HepG2 (cell line): ENCODE measurements at regions of chr2 and their contacts with region 1.

Region 1: GRCh38 chr2:15939854-15940660 is at the start of gene MYCN:
- DNase-seq: peak; percentile 41
- ATAC-seq: peak; percentile 68
- H3K4me3 ChIP-seq: peak within 1 kb of the TSS in 1 of 3 experiments; percentile 37; a peak in 1 of 6 replicates
- H3K27ac ChIP-seq: no peak within 1 kb of the TSS
- H3K4me1 ChIP-seq: peaks cover 11% of the 10 kb centered on the region; the same call in 1 of the 2 replicates
- H3K27me3 ChIP-seq: peaks cover 23 to 49% of the 10 kb centered on the region in 2 experiments
- CTCF ChIP-seq: no peak; the same call in 1 of the 2 replicates
- EP300 ChIP-seq: no peak
- POLR2A ChIP-seq: no peak
- RAD21 ChIP-seq: peak; percentile 95
- total RNA-seq, gene MYCN: not detected in 2 replicates

Region 2: DNA sequence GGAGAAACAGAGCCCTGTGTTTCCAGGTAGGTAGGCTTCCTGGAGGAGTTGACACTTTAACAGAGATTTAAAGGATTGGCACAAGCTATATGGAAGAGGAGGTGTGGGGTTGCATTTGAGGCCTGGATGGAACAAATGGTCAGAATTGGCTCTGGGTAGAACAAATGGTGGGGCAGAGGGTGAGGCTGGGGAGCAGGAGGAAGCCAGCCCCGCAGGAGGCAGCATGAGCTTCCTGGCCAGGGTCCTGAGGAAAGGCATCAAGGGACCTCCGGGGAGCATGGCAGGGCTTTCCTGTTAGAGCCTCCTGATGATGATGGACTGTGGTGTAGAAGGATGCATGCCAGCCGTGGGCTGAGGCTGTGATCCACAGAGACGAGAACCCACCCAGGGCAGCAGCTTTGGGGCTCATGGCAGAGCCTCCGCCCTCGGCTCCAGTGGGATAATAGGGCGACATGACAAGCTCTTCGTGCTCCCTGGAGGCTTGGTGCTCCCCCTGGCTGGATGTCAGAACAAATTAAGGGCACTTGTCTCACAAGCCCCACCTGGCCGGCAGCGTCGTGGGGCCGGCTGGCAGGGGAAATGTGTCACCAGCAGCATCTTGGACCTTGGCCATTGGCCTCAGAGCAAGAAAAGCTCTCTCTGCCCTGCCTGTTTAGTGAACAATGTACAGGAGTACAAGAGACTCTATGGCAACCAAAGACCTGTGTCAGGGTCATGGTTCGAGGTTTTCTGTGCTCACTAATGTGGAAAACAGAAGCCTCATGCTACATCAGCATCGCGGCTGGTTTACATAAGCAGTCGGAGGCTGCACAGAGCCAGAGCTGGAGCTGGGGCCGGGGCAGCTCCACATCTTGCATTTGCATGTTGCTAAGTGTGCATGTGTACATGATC is 153.8 kb after region 1 on chr2:
- CTCF ChIA-PET with region 1: no interaction called
- POLR2A ChIA-PET with region 1: no interaction called
- in situ Hi-C with region 1: no loop called
- intact Hi-C with region 1: loop called (anchors 5 kb)
- DNase-seq: peak; percentile 60
- ATAC-seq: peak; percentile 76
- H3K4me3 ChIP-seq: no peak overlapping the region
- H3K27ac ChIP-seq: no peak overlapping the region
- H3K4me1 ChIP-seq: peaks cover 72% of the 10 kb centered on the region
- H3K27me3 ChIP-seq: no peaks in the 10 kb centered on the region; a peak in 1 of 5 replicates
- CTCF ChIP-seq: peak; percentile 8; the same call in 1 of the 2 replicates
- EP300 ChIP-seq: peak in 1 of 2 experiments; percentile 29; a peak in 1 of 4 replicates
- POLR2A ChIP-seq: no peak
- RAD21 ChIP-seq: no peak

Region 3: GRCh38 chr2:16281451-16282336 is 341.6 kb after region 1 on chr2:
- CTCF ChIA-PET with region 1: interaction called, 18 read pairs
- POLR2A ChIA-PET with region 1: no interaction called
- in situ Hi-C with region 1: loop called (anchors 5 kb)
- intact Hi-C with region 1: loop called (anchors 1 kb)
- DNase-seq: peak; percentile 41
- ATAC-seq: peak; percentile 86
- H3K4me3 ChIP-seq: no peak overlapping the region
- H3K27ac ChIP-seq: no peak overlapping the region
- H3K4me1 ChIP-seq: no peaks in the 10 kb centered on the region
- H3K27me3 ChIP-seq: peaks cover 1 to 4% of the 10 kb centered on the region in 2 experiments; a peak in 3 of 5 replicates
- CTCF ChIP-seq: peak; percentile 71
- EP300 ChIP-seq: no peak
- POLR2A ChIP-seq: no peak
- RAD21 ChIP-seq: peak; percentile 61; the same call in 1 of the 2 replicates

Region 4: DNA sequence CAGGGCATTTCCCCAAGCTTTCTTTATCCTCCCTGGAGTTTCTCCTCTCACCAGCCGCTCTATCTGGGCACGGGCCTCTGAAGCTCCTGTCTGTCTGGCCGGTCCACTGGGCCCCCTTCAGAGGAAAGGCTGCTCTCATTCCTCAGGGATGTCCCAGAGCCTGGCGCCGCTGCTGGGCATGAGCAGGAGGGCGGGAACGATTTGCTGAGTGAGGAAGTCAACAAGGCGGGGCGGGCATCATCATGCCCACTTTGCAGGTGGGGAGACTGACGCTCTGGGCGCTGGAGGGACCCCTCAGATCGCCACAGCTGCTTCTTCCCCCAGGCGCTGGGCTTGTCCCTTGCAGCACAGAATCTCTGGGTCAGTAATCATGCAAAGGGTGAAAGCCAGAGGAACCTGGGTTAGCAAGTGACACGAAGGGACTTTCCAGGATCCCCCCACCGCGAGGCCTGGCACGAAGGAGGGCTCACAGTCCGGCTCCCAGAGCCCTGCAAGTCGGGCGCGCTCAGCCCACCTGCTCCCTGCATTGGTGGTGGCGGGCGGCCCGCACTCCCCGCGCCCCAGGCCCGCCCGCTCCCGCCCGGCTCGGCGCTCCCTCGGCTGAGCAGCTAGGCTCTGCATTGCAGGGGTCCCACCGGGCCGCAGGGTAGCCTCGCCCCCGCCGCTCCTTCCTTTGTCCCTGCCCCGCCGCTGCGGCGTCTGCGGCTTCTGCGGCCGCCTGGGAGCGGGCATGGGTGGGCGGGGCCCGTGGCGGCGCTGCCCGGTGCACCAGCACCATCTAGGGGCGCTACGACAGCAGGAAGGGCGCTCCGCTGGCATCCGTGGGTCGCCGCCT is 567.8 kb after region 1 on chr2:
- CTCF ChIA-PET with region 1: interaction called, 5 read pairs
- POLR2A ChIA-PET with region 1: no interaction called
- in situ Hi-C with region 1: no loop called
- intact Hi-C with region 1: loop called (anchors 2 kb)
- DNase-seq: peak; percentile 21
- ATAC-seq: peak; percentile 93
- H3K4me3 ChIP-seq: peak overlapping the region in 1 of 3 experiments; percentile 31; a peak in 1 of 6 replicates
- H3K27ac ChIP-seq: no peak overlapping the region
- H3K4me1 ChIP-seq: peaks cover 12% of the 10 kb centered on the region
- H3K27me3 ChIP-seq: peaks cover 0 to 22% of the 10 kb centered on the region in 2 experiments; a peak in 3 of 5 replicates
- CTCF ChIP-seq: peak; percentile 83
- EP300 ChIP-seq: no peak
- POLR2A ChIP-seq: no peak
- RAD21 ChIP-seq: peak; percentile 89